Natural killer cell (primary cell): ENCODE measurements at regions of chr11 and their contacts with region 1.

Region 1: GRCh38 chr11:119666463-119667131 is 62.4 kb downstream of the NECTIN1 start:
- DNase-seq: peak; percentile 66 to 76
- ATAC-seq: peak; percentile 86 to 98 (median 98)
- H3K4me3 ChIP-seq: no peak overlapping the region
- H3K4me3 Mint-ChIP-seq: no peak overlapping the region
- H3K27ac ChIP-seq: no peak overlapping the region
- H3K27ac Mint-ChIP-seq: no peak overlapping the region
- H3K4me1 ChIP-seq: no peaks in the 10 kb centered on the region
- H3K4me1 Mint-ChIP-seq: no peaks in the 10 kb centered on the region
- H3K27me3 ChIP-seq: no peaks in the 10 kb centered on the region
- H3K27me3 Mint-ChIP-seq: peaks cover 6 to 26% of the 10 kb centered on the region in 2 donors
- CTCF ChIP-seq: peak; percentile 90

Region 2: GRCh38 chr11:119741369-119742262 is 75.0 kb after region 1 on chr11:
- intact Hi-C with region 1: loop called (anchors 2 kb)
- DNase-seq: peak; percentile 51 to 74
- ATAC-seq: peak; percentile 69 to 85 (median 83)
- H3K4me3 ChIP-seq: no peak overlapping the region
- H3K4me3 Mint-ChIP-seq: no peak overlapping the region
- H3K27ac ChIP-seq: no peak overlapping the region
- H3K27ac Mint-ChIP-seq: no peak overlapping the region
- H3K4me1 ChIP-seq: peaks cover 15% of the 10 kb centered on the region
- H3K4me1 Mint-ChIP-seq: peaks cover 6 to 16% of the 10 kb centered on the region in 2 donors
- H3K27me3 ChIP-seq: peaks cover 20% of the 10 kb centered on the region
- H3K27me3 Mint-ChIP-seq: peaks cover 59 to 65% of the 10 kb centered on the region in 2 donors
- CTCF ChIP-seq: peak; percentile 77

Region 3: DNA sequence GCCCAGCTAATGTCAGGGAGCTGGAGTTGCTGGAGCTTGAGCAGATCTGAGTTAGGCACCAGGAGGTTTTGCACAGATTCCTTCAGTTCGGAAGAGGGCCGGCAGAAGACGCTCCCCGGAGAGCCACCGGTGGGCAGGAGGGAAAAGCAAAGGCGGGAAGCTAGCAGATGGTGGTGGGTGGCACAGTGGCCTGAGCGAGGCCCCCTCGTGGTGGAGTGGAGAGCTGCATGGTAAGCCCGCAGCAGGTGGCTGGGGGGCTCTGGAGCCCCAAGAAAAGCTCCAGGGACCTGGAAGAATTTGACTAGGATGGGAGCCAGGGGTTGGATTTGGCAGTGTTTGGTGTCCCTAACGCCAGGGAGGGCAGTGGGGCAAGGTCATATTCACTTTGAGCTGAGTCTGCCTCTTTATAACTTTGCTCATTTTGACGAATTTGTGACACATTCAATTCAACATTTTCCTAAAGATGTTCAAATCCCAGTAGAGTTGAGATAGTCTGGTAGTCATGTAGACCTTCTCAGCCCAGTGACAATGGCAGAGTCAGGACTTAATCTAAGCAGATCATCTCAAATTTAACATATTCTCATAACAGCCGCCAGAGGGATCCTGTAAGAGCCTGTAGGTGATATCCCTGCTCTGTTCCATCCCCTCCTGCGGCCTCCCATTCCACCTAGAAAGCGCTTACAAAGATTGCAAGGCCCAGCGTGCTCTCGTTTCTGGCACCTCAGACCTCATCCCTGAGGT is 413.3 kb after region 1 on chr11:
- intact Hi-C with region 1: loop called (anchors 1 kb)
- DNase-seq: peak; percentile 18 to 44
- ATAC-seq: peak; percentile 52 to 75 (median 73)
- H3K4me3 ChIP-seq: no peak overlapping the region
- H3K4me3 Mint-ChIP-seq: no peak overlapping the region
- H3K27ac ChIP-seq: no peak overlapping the region
- H3K27ac Mint-ChIP-seq: no peak overlapping the region
- H3K4me1 ChIP-seq: no peaks in the 10 kb centered on the region
- H3K4me1 Mint-ChIP-seq: peaks cover 0 to 5% of the 10 kb centered on the region in 2 donors
- H3K27me3 ChIP-seq: no peaks in the 10 kb centered on the region
- H3K27me3 Mint-ChIP-seq: peaks cover 15 to 32% of the 10 kb centered on the region in 2 donors
- CTCF ChIP-seq: peak; percentile 79

Region 4: DNA sequence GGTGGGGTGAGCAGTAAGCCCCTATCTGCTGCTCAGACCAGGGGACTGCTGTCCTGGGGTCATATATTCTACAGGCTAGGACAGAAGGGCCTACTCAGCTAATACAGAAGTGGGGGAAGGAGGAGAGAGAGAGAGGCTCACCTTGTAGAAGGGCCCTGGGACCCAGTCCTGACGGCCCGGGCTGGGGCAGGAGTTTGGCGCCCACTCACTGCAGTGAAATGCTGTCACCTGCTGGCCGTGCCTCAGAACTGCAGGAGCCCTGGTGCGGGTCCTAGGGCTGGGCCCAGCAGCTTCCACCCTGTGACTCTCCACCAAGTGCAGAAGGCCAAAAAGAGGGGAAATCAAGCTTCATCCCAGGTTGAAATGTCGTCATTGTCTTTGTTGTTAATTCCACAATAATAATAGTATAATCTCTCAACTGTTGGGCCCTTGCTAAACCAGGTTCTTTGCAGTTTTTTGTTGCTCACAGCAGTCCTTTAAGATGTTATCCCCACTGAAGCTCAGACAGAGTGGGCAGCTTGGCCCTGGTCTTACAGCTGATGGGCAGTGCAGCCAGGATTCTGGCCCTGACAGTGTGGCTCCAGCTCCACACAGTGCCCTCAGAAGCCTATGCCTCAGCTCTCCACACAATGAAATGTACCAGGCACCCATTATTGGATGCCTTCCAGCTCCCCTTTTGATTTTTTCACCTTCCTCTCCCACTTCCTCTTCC is 441.7 kb after region 1 on chr11:
- intact Hi-C with region 1: loop called (anchors 1 kb)
- DNase-seq: peak; percentile 55 to 64
- ATAC-seq: peak; percentile 75 to 92 (median 89)
- H3K4me3 ChIP-seq: no peak overlapping the region
- H3K4me3 Mint-ChIP-seq: no peak overlapping the region
- H3K27ac ChIP-seq: no peak overlapping the region
- H3K27ac Mint-ChIP-seq: no peak overlapping the region
- H3K4me1 ChIP-seq: no peaks in the 10 kb centered on the region
- H3K4me1 Mint-ChIP-seq: no peaks in the 10 kb centered on the region
- H3K27me3 ChIP-seq: no peaks in the 10 kb centered on the region
- H3K27me3 Mint-ChIP-seq: peaks cover 10 to 18% of the 10 kb centered on the region in 2 donors
- CTCF ChIP-seq: peak; percentile 95